ENCODE measurements at regions of chr22 and their contacts with region 1.

Region 1: GRCh38 chr22:23772649-23773495 is at the start of gene MMP11:
- DNase-seq: peak; percentile 90
- H3K4me3 ChIP-seq: peak within 1 kb of the TSS; percentile 8 to 75 (median 43)
- H3K27ac ChIP-seq: peak within 1 kb of the TSS in 5 of 8 donors; percentile 39 to 72 (median 56)
- H3K4me1 ChIP-seq: peaks cover 20 to 69% (median 55%) of the 10 kb centered on the region in 6 donors
- H3K27me3 ChIP-seq: peaks cover 0 to 16% (median 0%) of the 10 kb centered on the region in 7 donors
- CTCF ChIP-seq: peak in 1 of 11 experiments; percentile 13
- POLR2A ChIP-seq: no peak
- total RNA-seq, gene MMP11: 0.66 to 11.0 (median 3.3) TPM

Region 2: DNA sequence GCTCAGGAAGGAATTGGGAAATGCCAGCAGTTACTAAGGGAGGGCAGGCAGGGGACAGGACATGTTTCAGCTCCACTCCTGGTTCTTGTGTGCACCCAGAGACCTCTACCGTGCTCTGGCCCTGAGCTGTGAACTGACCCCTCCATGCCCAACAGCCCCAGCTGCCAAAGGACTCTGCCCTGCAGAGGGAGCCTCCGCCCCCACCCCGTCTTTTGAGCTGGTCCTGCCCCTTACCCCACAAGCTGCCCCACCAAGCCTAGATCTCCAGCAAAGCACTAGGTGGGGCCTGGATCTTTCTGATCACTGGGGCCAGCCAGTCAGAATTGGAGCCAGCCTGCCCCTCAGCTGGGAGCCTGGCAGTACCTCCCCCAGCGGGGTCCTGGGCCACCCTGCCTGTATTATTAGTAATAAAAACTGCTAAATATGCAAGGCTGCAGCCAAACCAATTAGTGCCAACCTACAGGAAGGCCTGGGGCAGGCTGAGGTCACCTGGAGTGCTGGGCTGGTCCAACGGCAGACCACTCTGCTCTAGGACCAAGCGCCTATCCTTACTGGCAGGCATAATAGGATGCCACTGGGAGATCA is 116.9 kb before region 1 on chr22:
- intact Hi-C with region 1: no loop called
- DNase-seq: peak; percentile 48
- H3K4me3 ChIP-seq: no peak overlapping the region
- H3K27ac ChIP-seq: no peak overlapping the region
- H3K4me1 ChIP-seq: no peaks in the 10 kb centered on the region
- H3K27me3 ChIP-seq: no peaks in the 10 kb centered on the region
- CTCF ChIP-seq: no peak
- POLR2A ChIP-seq: no peak

Region 3: DNA sequence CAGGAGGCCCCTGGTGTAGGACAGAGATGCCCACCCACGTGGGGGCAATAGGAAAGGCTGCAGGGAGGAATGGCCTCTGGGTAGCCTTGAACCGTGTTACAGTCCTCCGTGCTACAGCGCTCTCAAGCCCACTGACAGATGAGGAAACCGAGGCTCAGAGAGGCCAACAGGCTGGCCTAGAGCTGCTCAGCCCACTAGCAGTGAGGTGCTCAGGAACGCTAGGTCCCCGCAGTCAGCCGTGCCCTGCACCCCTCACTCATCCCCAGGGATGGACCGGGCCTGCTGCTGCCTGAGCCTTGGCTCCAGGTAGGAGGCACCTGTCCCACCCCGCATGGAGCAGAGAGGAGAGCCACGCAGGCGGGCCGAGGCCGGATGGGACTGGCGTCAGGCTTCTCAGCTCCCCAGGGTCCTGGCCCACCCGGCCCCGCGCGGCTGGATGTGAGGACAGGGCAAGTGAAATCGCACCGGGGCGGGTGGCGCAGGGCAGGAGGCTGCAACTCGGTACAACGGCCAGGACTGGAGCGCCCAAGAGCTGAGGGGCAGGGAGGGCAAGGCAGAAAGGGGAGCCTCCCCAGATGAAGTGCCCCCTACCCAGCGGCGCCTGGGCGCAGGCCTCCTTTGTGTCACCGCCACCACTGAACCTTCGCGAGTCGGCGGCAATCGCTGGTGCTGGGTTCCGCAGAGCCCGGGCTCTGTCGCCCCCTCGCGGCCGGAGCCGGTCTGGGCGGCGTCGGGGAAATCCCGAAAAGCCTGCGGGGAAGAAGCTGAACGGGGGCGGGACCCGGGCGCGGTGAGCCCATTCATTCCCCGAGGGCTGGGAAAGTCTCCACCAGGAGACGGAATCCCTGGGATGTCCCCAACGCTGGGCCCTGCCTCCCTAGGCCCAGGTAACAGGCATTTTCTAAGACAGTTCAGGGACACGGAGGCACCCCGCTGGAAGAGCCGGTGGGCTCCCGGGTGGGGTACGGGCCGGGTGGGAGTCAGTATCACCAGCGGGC is 76.4 kb after region 1 on chr22:
- intact Hi-C with region 1: loop called (anchors 5 kb)
- DNase-seq: peak; percentile 97
- H3K4me3 ChIP-seq: peak overlapping the region in 4 of 8 donors; percentile 16 to 47 (median 18)
- H3K27ac ChIP-seq: no peak overlapping the region
- H3K4me1 ChIP-seq: peaks cover 33 to 56% (median 42%) of the 10 kb centered on the region in 6 donors
- H3K27me3 ChIP-seq: peaks cover 0 to 8% (median 0%) of the 10 kb centered on the region in 7 donors
- CTCF ChIP-seq: peak; percentile 87 to 99 (median 97)
- POLR2A ChIP-seq: no peak

Measured in spleen (tissue), 13 donors.